A673 (cell line): ENCODE measurements at regions of chr19 and their contacts with region 1.

Region 1: DNA sequence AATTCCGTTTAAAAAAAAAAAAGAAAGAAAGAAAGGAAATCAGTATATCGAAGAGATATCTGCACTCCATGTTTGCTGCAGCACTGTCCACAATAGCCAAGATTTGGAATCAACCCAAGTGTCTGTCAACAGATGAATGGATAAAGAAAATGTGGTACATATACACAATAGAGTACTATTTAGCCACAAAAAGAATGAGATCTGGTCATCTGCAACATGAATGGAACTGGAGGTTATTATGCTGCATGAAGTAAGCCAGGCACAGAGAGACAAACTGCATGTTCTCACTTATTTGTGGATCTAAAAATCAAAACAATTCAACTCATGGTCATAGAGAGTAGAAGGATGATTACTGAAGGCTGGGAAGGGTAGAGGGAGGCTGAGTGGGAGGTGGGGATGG is 16.3 kb downstream of the ZNF565 start:
- DNase-seq: no peak
- H3K4me3 ChIP-seq: no peak overlapping the region
- H3K27ac ChIP-seq: no peak overlapping the region
- H3K4me1 ChIP-seq: no peaks in the 10 kb centered on the region
- H3K27me3 ChIP-seq: no peaks in the 10 kb centered on the region
- CTCF ChIP-seq: no peak

Region 2: GRCh38 chr19:36489118-36489919 is 291.2 kb after region 1 on chr19 and contains the start of gene ZNF566:
- CTCF ChIA-PET with region 1: no interaction called
- POLR2A ChIA-PET with region 1: no interaction called
- intact Hi-C with region 1: loop called (anchors 5 kb)
- DNase-seq: peak; percentile 98
- H3K4me3 ChIP-seq: peak within 1 kb of the TSS; percentile 61
- H3K27ac ChIP-seq: peak within 1 kb of the TSS; percentile 97
- H3K4me1 ChIP-seq: peaks cover 3% of the 10 kb centered on the region
- H3K27me3 ChIP-seq: no peaks in the 10 kb centered on the region
- CTCF ChIP-seq: no peak
- total RNA-seq, gene ZNF566: 16.2 and 16.4 TPM in 2 replicates